Left ventricle myocardium superior (tissue), 1 donor: ENCODE measurements at regions of chr5 and their contacts with region 1.

Region 1: DNA sequence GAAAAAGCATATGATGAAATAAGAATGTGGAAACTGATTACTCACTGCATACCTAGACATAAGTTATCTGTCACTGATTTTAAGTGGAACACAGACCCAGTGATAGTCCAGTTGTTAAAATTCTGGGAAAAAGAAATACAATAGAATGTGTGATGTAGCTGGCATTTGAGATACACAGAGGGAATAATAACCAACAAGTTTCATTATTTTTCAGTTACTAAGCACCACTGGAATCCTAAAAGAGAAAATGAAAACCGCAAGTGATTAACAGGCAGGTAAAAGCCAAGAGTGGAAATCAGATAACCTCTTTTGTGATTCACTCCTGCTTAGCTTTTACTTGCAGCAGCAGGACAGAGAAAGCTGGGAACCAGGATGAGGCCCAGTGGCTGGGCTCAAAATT is 994.0 kb upstream of the SEMA6A start:
- DNase-seq: no peak
- ATAC-seq: no peak

Region 2: GRCh38 chr5:117359895-117360294 is 208.7 kb before region 1 on chr5:
- intact Hi-C with region 1: loop called (anchors 5 kb)
- DNase-seq: no peak
- ATAC-seq: no peak

Region 3: DNA sequence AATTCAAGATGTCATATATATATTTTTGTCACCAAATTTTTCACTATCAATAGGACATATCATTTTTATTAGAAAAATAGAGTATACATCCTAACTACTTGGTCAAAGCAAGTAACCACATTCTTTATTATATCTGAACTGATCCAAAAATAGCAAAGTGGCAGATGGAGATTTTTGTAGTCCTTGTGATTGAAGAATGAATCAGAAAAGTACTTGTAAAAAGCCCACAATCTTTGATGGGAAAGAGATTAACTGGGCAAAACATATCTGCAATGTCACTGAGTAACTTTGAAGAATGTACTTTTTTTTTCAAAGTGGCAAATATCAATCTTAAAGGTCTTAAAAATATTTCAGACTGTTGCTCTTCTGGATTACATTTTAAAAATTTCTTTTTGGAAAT is 46.6 kb after region 1 on chr5:
- intact Hi-C with region 1: no loop called
- DNase-seq: no peak
- ATAC-seq: no peak